ENCODE measurements at regions of chr17 and their contacts with region 1.

Region 1: DNA sequence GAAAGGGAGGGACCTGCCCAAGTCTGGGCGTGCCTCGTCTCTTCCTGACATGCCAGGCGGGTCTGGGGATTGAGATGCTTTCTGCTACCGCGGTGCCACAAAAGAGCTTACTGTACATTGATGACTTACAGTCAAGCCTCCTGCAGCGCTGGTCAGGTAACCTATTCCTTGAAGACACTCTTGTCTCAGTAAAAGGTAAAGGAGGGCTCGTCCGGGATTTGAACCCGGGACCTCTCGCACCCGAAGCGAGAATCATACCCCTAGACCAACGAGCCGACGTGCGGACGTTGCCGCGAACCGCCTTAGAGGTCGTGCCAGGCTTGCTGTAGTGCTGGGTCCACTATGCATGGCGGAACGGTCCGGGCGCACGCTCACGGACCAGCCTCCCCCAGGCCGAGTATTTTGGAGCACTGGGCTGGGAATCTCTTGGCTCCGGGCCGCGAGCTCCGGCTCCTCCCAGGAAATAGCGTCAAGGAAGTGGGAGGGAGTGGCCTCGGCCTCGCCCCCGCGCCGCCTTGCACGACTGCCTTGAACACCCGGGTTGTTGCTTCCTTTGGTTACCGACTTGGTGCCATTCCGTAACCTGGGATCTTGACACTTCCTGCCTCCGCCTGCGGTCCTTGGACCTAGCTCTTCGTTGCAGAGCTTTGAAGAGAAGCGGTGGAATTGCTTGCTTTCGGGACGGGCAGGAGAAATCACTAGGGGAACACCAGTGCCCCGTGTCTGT is 12.4 kb upstream of the AURKB start:
- DNase-seq: peak; percentile 96
- ATAC-seq: peak; percentile 67

Region 2: GRCh38 chr17:8186787-8187516 is 35.8 kb before region 1 on chr17:
- intact Hi-C with region 1: loop called (anchors 2 kb)
- DNase-seq: peak; percentile 94
- ATAC-seq: peak; percentile 70

Measured in Right ventricle myocardium superior (tissue), 1 donor.